Posterior vena cava (tissue), 2 donors: ENCODE measurements at regions of chr2 and their contacts with region 1.

Region 1: GRCh38 chr2:6103949-6104348 is 411.8 kb downstream of the SOX11 start:
- DNase-seq: no peak

Region 2: GRCh38 chr2:5442736-5443135 is 661.2 kb before region 1 on chr2:
- intact Hi-C with region 1: loop called in 1 of 2 experiments (anchors 5 kb)
- DNase-seq: no peak

Region 3: GRCh38 chr2:5915881-5916310 is 188.1 kb before region 1 on chr2:
- intact Hi-C with region 1: no loop called
- DNase-seq: no peak